CD4-positive, alpha-beta memory T cell (primary cell): ENCODE measurements at regions of chr1 and their contacts with region 1.

Region 1: DNA sequence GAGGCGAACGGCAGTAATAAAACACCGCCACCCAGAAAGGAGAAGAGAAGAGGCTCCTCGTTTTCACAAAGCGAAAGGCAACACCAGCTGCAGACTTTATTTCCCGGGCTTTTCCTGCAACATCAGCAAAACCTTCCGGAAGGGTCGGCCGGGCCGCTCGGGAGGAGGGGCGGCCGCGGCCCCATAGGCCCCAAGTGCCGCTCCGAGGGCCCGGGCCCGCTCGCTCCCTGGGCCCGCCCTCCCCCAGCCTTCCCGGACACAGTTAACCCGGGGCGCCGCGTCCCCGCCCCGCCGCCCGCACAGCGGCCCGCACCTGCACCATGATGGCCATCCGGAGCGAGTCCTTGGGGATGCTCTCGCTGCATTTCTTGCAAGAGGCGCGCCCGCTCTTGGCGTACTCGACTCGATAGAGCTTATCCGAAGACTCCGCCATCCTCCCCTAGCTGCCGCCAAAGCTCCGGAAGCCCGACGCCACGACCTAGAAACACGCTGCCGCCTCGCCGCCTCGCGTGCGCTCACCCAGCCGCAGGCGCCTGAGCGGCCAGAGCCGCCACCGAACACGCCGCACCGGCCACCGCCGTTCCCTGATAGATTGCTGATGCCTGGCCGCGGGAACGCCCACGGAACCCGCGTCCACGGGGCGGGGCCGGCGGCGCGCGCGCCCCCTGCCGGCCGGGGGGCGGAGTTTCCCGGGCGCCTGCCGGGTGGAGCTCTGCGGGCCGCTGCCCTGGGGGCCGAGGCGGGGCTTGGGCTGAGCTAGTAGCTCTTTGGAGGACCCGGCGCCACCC is at the start of gene PARP1:
- DNase-seq: peak; percentile 91 to 94 (median 91)
- H3K4me3 ChIP-seq: peak within 1 kb of the TSS; percentile 68 to 83
- H3K4me3 Mint-ChIP-seq: peak within 1 kb of the TSS; percentile 94 to 99 (median 98)
- H3K27ac ChIP-seq: peak within 1 kb of the TSS; percentile 76
- H3K27ac Mint-ChIP-seq: peak within 1 kb of the TSS; percentile 94 to 98 (median 96)
- H3K4me1 ChIP-seq: peaks cover 46% of the 10 kb centered on the region
- H3K4me1 Mint-ChIP-seq: peaks cover 32 to 60% (median 43%) of the 10 kb centered on the region in 4 donors
- H3K27me3 ChIP-seq: no peaks in the 10 kb centered on the region
- H3K27me3 Mint-ChIP-seq: no peaks in the 10 kb centered on the region
- total RNA-seq, gene PARP1: 120 to 129 TPM

Region 2: GRCh38 chr1:226186124-226187018 is 221.3 kb before region 1 on chr1 and contains the start of gene ACBD3:
- CTCF ChIA-PET with region 1: no interaction called
- POLR2A ChIA-PET with region 1: no interaction called
- intact Hi-C with region 1: loop called (anchors 5 kb)
- DNase-seq: peak; percentile 82 to 91 (median 84)
- H3K4me3 ChIP-seq: peak within 1 kb of the TSS; percentile 98 to 99
- H3K4me3 Mint-ChIP-seq: peak within 1 kb of the TSS; percentile 92 to 98 (median 95)
- H3K27ac ChIP-seq: peak within 1 kb of the TSS; percentile 70
- H3K27ac Mint-ChIP-seq: peak within 1 kb of the TSS; percentile 90 to 97 (median 95)
- H3K4me1 ChIP-seq: peaks cover 43% of the 10 kb centered on the region
- H3K4me1 Mint-ChIP-seq: peaks cover 23 to 40% (median 31%) of the 10 kb centered on the region in 4 donors
- H3K27me3 ChIP-seq: no peaks in the 10 kb centered on the region
- H3K27me3 Mint-ChIP-seq: no peaks in the 10 kb centered on the region
- total RNA-seq, gene ACBD3: 28.7 to 29.7 TPM

Region 3: GRCh38 chr1:226397011-226397926 is 10.4 kb before region 1 on chr1:
- CTCF ChIA-PET with region 1: interaction called, 11 read pairs
- POLR2A ChIA-PET with region 1: interaction called, 6 read pairs
- intact Hi-C with region 1: no loop called
- DNase-seq: no peak
- H3K4me3 ChIP-seq: no peak overlapping the region
- H3K4me3 Mint-ChIP-seq: no peak overlapping the region
- H3K27ac ChIP-seq: no peak overlapping the region
- H3K27ac Mint-ChIP-seq: peak overlapping the region in 2 of 7 donors; percentile 30 to 79
- H3K4me1 ChIP-seq: peaks cover 3% of the 10 kb centered on the region
- H3K4me1 Mint-ChIP-seq: peaks cover 30 to 69% (median 47%) of the 10 kb centered on the region in 4 donors
- H3K27me3 ChIP-seq: no peaks in the 10 kb centered on the region
- H3K27me3 Mint-ChIP-seq: no peaks in the 10 kb centered on the region

Region 4: GRCh38 chr1:226444901-226445300 is 37.2 kb after region 1 on chr1:
- CTCF ChIA-PET with region 1: interaction called, 24 read pairs
- POLR2A ChIA-PET with region 1: interaction called, 46 read pairs
- intact Hi-C with region 1: loop called (anchors 1 kb)
- DNase-seq: peak; percentile 77 to 82 (median 78)
- H3K4me3 ChIP-seq: no peak overlapping the region
- H3K4me3 Mint-ChIP-seq: peak overlapping the region; percentile 33 to 75 (median 61)
- H3K27ac ChIP-seq: no peak overlapping the region
- H3K27ac Mint-ChIP-seq: peak overlapping the region; percentile 55 to 91 (median 82)
- H3K4me1 ChIP-seq: peaks cover 29% of the 10 kb centered on the region
- H3K4me1 Mint-ChIP-seq: peaks cover 21 to 34% (median 26%) of the 10 kb centered on the region in 4 donors
- H3K27me3 ChIP-seq: no peaks in the 10 kb centered on the region
- H3K27me3 Mint-ChIP-seq: no peaks in the 10 kb centered on the region

Region 5: DNA sequence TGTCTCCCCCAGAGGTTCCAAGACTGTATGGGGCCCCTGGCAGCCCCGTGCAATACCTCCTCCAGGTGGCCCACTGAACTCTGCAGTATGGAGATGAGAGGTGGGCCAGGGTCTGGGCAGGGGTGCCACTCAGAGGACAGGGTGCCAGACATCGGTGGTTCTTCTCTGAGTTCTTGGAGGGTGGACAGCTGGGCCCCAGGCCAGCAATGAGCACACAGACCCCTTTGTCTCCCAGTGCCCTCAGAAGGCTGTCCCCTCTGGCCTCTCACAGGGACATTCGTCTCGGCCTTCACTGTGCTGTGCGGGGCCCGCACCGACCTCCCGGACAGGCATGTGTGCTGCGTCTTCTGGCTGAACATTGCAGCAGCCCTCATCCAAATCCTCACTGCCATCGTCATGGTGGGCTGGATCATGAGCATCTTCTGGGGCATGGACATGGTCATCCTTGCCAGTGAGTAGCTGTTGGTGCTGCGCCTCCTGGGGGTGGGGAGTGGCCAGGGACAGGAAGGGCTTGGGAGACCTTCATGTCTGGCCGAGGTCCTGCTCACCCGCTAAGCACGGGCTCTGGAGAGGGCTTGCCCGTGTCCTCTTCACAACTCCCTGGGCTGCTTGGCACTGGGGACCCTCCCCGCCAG is 189.0 kb after region 1 on chr1:
- CTCF ChIA-PET with region 1: no interaction called
- POLR2A ChIA-PET with region 1: no interaction called
- intact Hi-C with region 1: no loop called
- DNase-seq: no peak
- H3K4me3 ChIP-seq: no peak overlapping the region
- H3K4me3 Mint-ChIP-seq: no peak overlapping the region
- H3K27ac ChIP-seq: no peak overlapping the region
- H3K27ac Mint-ChIP-seq: peak overlapping the region in 1 of 7 donors; percentile 44
- H3K4me1 ChIP-seq: no peaks in the 10 kb centered on the region
- H3K4me1 Mint-ChIP-seq: no peaks in the 10 kb centered on the region
- H3K27me3 ChIP-seq: no peaks in the 10 kb centered on the region
- H3K27me3 Mint-ChIP-seq: peaks cover 7 to 17% of the 10 kb centered on the region in 2 donors

Region 6: GRCh38 chr1:226778657-226779058 is 371.0 kb after region 1 on chr1:
- CTCF ChIA-PET with region 1: no interaction called
- POLR2A ChIA-PET with region 1: no interaction called
- intact Hi-C with region 1: no loop called
- DNase-seq: no peak
- H3K4me3 ChIP-seq: no peak overlapping the region
- H3K4me3 Mint-ChIP-seq: peak overlapping the region in 1 of 8 donors; percentile 39
- H3K27ac ChIP-seq: no peak overlapping the region
- H3K27ac Mint-ChIP-seq: no peak overlapping the region
- H3K4me1 ChIP-seq: no peaks in the 10 kb centered on the region
- H3K4me1 Mint-ChIP-seq: peaks cover 5 to 9% (median 6%) of the 10 kb centered on the region in 4 donors
- H3K27me3 ChIP-seq: no peaks in the 10 kb centered on the region
- H3K27me3 Mint-ChIP-seq: no peaks in the 10 kb centered on the region

Region 7: GRCh38 chr1:226940029-226940805 is 532.5 kb after region 1 on chr1 and contains the start of gene COQ8A:
- CTCF ChIA-PET with region 1: no interaction called
- POLR2A ChIA-PET with region 1: interaction called, 16 read pairs
- intact Hi-C with region 1: loop called (anchors 2 kb)
- DNase-seq: peak; percentile 98 to 100 (median 99)
- H3K4me3 ChIP-seq: peak within 1 kb of the TSS; percentile 75 to 84
- H3K4me3 Mint-ChIP-seq: peak within 1 kb of the TSS; percentile 89 to 95 (median 92)
- H3K27ac ChIP-seq: peak within 1 kb of the TSS; percentile 87
- H3K27ac Mint-ChIP-seq: peak within 1 kb of the TSS; percentile 96 to 98 (median 97)
- H3K4me1 ChIP-seq: peaks cover 40% of the 10 kb centered on the region
- H3K4me1 Mint-ChIP-seq: peaks cover 31 to 67% (median 50%) of the 10 kb centered on the region in 4 donors
- H3K27me3 ChIP-seq: no peaks in the 10 kb centered on the region
- H3K27me3 Mint-ChIP-seq: peaks cover 0 to 2% of the 10 kb centered on the region in 2 donors
- total RNA-seq, gene COQ8A: 69.2 to 70.7 TPM